AG04450 (cell line): ENCODE measurements at regions of chr1 and their contacts with region 1.

Region 1: DNA sequence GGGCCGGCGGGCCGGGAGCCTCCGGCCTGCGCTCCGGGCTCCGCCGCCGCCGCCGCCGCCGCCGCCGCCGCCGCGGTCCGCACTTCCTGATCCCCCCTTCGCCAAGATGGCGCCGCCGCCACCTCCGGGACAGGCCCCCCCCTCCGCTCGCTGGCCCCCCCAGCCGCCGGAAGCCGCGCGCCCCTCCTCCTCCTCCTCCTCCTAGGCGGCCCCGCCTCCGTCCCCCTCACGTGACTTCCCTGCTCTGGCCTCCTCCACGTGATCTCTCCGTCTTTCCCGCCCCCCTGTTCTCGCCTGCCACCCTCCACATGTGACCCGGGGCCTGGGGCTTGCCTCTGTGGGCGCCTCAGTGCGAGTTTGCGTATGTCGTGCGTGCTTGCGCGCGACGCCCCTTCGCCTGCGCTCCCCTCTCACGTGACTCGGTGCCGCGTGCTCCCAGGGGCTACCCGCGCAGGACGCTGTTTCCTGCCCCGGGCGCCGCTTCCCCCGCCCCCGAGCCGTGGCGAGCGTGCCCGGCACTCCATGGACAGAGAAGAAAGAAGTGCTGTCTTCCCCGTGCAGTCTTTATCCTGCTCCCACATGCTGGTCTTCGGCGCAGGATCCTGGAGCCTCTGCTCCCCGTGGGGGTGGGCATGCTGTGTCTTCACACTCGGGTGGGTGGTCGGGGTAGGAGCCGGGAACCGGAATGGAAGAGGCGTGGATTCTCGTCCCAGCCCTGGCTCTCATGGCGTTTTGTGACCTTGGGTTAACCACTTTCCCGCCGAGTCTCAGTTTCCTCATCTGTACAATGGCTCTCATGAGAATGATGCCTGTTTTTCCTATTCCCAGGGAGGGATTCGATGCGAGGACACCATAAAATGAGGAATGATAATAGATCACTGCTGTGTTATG is at the start of gene UBE2Q1:
- DNase-seq: peak; percentile 98
- H3K4me3 ChIP-seq: peak within 1 kb of the TSS; percentile 76
- H3K27ac ChIP-seq: peak within 1 kb of the TSS; percentile 91
- H3K27me3 ChIP-seq: no peaks in the 10 kb centered on the region
- CTCF ChIP-seq: no peak
- polyA plus RNA-seq, gene UBE2Q1: 16.9 and 17.6 TPM in 2 replicates

Region 2: DNA sequence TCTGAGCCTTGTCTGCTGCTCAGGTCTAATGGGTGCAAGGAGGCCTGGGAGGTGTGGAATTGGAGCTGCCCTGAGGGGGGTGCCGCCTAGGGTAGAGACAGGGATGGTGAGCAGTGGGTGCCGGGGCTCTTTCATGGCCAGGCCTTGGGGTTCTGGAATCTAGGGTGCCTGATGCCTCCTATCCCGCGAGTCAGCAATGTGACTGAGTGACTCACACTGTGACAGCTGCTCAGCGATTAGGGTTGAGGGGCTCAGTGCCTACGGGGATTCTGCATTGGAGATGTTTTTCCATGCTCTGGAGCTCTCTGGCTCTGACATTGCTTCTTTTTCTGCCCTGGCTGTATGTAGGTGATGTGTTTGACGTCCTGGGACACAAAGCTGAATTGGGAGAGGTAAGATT is 216.7 kb before region 1 on chr1:
- CTCF ChIA-PET with region 1: no interaction called
- POLR2A ChIA-PET with region 1: no interaction called
- DNase-seq: no peak
- H3K4me3 ChIP-seq: no peak overlapping the region
- H3K27ac ChIP-seq: no peak overlapping the region
- H3K27me3 ChIP-seq: no peaks in the 10 kb centered on the region
- CTCF ChIP-seq: no peak

Region 3: GRCh38 chr1:154546264-154547063 is 12.4 kb before region 1 on chr1:
- CTCF ChIA-PET with region 1: interaction called, 10 read pairs
- POLR2A ChIA-PET with region 1: no interaction called
- DNase-seq: no peak
- H3K4me3 ChIP-seq: no peak overlapping the region
- H3K27ac ChIP-seq: no peak overlapping the region
- H3K27me3 ChIP-seq: peaks cover 17% of the 10 kb centered on the region
- CTCF ChIP-seq: peak; percentile 83

Region 4: DNA sequence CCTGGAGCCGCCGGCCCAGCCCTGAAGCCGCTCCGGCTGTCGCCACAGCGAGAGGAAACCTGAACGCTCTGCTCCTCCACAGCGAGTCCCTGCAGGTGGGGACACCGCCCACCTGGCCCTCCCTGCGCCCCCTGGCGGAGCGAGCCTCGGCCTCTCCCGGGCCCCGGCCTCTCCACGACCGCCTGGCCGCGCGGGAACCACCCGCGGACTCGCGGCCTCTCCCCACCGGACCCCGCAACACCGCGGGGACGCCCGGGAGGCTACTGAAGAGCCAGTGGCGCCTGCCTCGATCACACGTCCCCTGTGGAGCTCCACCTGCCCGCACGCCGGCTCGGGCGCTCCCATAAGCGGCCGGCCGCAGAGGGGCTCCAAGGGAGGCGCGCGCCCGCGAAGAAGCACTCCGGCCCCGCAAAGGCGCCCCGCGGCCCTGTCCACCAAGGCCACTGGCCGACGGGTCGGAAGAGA is 201.7 kb after region 1 on chr1:
- CTCF ChIA-PET with region 1: interaction called, 14 read pairs
- POLR2A ChIA-PET with region 1: no interaction called
- DNase-seq: no peak
- H3K4me3 ChIP-seq: peak overlapping the region; percentile 31; the same call in 1 of the 2 replicates
- H3K27ac ChIP-seq: no peak overlapping the region
- H3K27me3 ChIP-seq: peaks cover 31% of the 10 kb centered on the region
- CTCF ChIP-seq: peak; percentile 60

Region 5: GRCh38 chr1:154936555-154937084 is 377.8 kb after region 1 on chr1 and contains the start of gene PMVK:
- CTCF ChIA-PET with region 1: interaction called, 17 read pairs
- POLR2A ChIA-PET with region 1: no interaction called
- DNase-seq: peak; percentile 91
- H3K4me3 ChIP-seq: peak within 1 kb of the TSS; percentile 72
- H3K27ac ChIP-seq: peak within 1 kb of the TSS; percentile 99
- H3K27me3 ChIP-seq: peaks cover 2% of the 10 kb centered on the region
- CTCF ChIP-seq: peak; percentile 42
- polyA plus RNA-seq, gene PMVK: 21.0 and 24.7 TPM in 2 replicates